Tibial artery (tissue), 4 donors: ENCODE measurements at regions of chr10 and their contacts with region 1.

Region 1: DNA sequence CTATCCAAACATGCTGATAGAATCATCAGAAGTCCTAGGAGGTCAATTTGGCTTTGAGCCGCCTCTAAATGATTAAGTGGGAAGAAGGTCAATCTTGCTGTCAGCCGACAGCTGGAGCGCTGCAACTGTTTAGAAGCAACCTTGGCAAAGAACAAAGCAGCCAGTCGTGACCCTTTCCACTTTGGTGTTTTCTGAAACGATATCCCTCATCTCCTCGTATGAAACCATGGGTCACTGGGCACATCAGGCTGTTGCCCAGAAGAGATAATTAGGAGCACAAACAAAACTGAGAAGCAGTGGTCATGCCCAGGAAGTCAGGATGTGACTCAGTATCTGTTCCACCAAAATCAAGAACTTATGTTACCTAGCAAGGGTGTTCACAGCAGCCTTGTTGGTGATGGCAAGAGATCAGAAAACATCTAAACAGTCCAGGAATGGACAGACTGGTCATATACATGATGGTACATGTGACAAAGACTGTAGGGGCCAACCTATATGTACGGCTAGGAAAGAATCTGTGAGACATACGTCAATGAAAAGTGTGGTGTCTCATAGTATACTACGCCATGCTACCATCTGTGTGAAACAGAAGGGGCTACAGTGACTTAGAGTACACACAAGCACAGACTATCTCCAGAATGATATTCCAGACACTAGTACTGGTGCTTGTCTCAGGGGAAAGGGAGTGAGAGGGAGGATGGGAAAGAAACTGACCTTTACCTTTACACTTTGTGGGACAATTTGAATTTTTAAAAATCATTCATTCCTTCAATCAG is 22.4 kb downstream of the STN1 start:
- DNase-seq: no peak
- H3K4me3 ChIP-seq: no peak overlapping the region
- H3K27ac ChIP-seq: peak overlapping the region; percentile 4 to 37
- H3K4me1 ChIP-seq: peaks cover 0 to 23% (median 7%) of the 10 kb centered on the region in 4 donors
- H3K27me3 ChIP-seq: no peaks in the 10 kb centered on the region
- CTCF ChIP-seq: no peak

Region 2: DNA sequence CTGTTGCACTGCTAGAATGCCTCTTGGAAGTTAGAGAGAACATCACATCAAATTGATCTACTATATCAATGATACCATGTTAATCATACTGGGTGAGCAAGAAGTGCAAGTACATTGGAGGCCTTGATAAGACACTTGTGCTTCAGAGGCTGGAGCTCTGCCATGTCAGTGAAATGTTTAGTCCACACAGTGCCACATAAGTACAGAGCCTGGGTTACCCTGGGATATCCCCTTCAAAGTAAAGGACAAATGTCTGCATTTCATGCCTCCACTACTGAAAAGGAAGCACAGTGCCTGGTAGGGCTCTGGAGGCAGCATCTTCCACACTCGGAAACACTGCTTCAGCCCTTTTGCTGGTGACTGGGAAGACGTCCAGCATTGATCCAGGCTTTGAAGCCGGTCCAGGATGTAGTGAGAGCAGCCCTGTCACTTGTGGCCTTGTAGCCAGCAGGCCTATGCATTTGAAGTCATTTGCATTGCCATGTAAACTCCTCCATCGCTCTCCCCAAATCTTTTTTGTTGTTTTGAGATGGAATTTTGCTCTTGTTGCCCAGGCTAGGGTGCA is 38.0 kb after region 1 on chr10:
- intact Hi-C with region 1: no loop called
- DNase-seq: no peak
- H3K4me3 ChIP-seq: no peak overlapping the region
- H3K27ac ChIP-seq: no peak overlapping the region
- H3K4me1 ChIP-seq: no peaks in the 10 kb centered on the region
- H3K27me3 ChIP-seq: no peaks in the 10 kb centered on the region
- CTCF ChIP-seq: no peak

Region 3: GRCh38 chr10:103966671-103967447 is 71.3 kb after region 1 on chr10 and contains the start of gene SLK:
- intact Hi-C with region 1: no loop called
- DNase-seq: peak; percentile 74 to 89
- H3K4me3 ChIP-seq: peak within 1 kb of the TSS; percentile 96 to 98
- H3K27ac ChIP-seq: peak within 1 kb of the TSS; percentile 97 to 99
- H3K4me1 ChIP-seq: peaks cover 0 to 34% (median 20%) of the 10 kb centered on the region in 4 donors
- H3K27me3 ChIP-seq: no peaks in the 10 kb centered on the region
- CTCF ChIP-seq: no peak

Region 4: DNA sequence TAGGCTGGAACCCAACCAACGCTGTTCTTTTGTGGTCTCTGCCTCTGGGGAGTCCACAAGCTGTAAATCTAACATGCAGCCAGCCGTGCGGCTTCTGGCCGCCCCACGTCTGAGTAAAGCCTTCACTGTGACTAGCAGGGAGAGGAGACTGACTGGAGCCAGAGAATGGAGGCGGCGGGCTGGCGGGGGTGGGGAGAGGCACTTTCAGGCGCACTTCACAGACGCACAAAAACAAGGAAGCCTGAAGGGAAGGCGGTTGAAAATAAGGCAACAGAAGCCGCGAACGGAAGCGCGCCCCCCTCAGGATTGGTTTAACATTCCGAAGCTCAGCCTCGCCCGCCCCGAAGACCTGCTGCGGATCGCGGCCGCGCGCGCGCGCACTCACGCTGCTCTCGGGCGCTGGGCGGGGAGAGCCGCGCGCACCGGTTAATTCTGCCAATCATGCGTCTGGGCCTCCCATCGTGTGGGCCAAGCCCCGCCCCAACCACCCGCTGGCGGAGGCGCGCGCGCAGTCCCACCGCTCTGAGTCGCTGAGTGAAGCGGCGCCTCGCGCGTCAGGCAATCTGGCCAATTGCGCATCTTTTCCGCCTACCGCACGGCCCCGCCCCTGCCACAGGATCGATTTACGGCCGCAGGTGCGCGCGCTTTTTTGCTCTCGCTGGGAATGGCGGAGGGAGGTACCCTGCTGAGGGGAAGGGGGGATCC is 226.1 kb after region 1 on chr10 and contains the start of gene SFR1:
- intact Hi-C with region 1: loop called (anchors 10 kb)
- DNase-seq: peak; percentile 98 to 99
- H3K4me3 ChIP-seq: peak within 1 kb of the TSS; percentile 60 to 72
- H3K27ac ChIP-seq: peak within 1 kb of the TSS; percentile 96 to 98
- H3K4me1 ChIP-seq: peaks cover 0 to 25% (median 13%) of the 10 kb centered on the region in 4 donors
- H3K27me3 ChIP-seq: no peaks in the 10 kb centered on the region
- CTCF ChIP-seq: peak; percentile 54